Mammary epithelial cell (primary cell): ENCODE measurements at regions of chr1 and their contacts with region 1.

Region 1: DNA sequence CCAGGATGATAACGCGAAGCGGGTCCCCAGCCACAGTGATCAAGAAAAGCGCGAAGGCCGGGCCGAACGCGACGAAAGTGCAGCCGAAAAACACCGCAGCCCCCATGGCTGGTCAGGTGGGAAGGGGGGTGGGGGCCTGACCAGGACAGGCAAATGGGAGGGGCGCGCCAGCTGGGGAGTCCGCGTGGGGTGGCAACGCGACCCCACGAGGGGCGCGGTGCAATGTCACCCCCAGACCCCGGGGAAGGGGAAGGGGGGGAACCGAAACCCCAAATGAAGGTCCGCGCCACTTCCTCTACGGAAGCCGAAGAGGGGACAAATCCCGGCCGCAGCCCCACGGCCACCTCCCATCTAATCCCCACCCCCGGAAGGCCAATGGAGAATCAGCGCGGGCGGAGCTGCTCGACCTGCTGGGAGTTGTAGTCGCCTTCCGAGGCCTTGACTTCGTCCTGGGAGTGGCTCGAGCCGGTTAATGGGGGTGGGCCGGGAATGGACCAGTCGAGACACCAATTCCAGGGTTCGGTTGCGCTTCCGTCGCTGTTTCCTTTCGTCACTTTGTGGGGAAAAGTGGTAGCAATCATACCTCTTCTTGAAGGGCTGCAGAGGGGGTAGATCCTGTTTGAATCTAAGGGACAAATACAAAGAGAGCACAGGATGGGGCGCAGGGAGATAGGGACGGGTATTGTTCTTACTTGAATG is at the start of gene APH1A:
- DNase-seq: peak; percentile 97
- H3K4me3 ChIP-seq: peak within 1 kb of the TSS; percentile 73 to 93 (median 92)
- H3K27ac ChIP-seq: peak within 1 kb of the TSS; percentile 92
- H3K4me1 ChIP-seq: peaks cover 11% of the 10 kb centered on the region
- H3K27me3 ChIP-seq: no peaks in the 10 kb centered on the region
- CTCF ChIP-seq: no peak
- total RNA-seq, gene APH1A: 113 to 119 TPM

Region 2: DNA sequence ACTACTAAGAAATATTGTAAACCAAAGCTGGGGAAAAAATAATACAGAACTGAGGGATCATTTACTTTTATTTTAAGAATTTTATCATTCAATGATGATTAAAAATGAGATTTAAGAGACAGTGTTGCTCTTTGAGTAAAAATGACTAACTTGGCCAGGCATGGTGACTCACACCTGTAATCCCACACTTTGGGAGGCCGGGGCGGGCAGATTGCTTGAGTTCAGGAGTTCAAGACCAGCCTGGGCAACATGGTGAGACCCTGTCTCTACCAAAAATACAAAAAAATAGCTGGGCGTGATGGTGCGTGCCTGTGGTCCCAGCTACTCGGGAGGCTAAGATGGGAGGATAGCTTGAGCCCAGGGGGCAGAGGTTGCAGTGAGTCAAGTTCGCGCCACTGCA is 141.0 kb before region 1 on chr1:
- CTCF ChIA-PET with region 1: no interaction called
- dilution Hi-C with region 1: no loop called
- in situ Hi-C with region 1: no loop called
- intact Hi-C with region 1: no loop called
- DNase-seq: no peak
- H3K4me3 ChIP-seq: no peak overlapping the region
- H3K27ac ChIP-seq: no peak overlapping the region
- H3K4me1 ChIP-seq: no peaks in the 10 kb centered on the region
- H3K27me3 ChIP-seq: no peaks in the 10 kb centered on the region
- CTCF ChIP-seq: no peak

Region 3: DNA sequence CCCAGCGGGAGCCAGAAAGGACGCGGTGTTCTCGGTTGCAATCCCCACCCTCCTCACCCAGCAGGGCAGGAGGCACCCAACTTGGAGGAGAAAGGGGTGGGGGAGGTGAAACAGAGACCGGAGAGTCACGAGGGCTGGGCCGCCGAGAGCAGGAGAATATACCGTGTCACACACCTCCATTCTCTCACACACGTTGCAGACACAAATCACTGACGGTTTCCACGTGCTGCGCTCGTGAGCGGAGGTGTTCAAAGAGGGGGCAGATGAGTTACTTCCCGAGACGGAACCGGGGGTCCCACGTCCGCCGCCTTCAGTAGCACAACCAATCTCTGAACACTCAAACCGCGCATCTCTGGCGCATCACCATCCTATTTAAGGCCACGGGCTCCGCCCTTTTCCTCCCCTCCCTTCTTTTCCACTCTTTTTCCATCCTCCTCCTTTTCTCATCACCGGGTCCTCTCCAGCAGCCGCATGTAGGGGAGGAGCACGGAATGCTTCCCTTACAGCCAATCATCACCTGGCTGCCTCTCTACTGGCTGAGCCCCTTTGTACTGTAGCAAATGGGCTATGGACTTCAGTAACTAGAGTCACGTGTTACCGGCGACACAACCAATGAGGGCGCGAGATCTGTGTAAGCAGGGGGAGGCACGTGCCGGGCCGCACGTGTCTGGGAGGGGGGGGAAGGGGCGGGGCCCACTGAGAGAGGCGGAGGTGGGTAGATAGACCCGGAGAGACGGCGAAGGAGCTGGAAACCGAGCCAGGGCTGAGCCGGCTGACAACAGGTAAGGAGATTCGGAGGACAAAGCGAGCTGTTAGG is 13.2 kb after region 1 on chr1 and contains the start of gene CIART:
- CTCF ChIA-PET with region 1: no interaction called
- dilution Hi-C with region 1: no loop called
- in situ Hi-C with region 1: no loop called
- intact Hi-C with region 1: loop called (anchors 1 kb)
- DNase-seq: peak; percentile 98
- H3K4me3 ChIP-seq: peak within 1 kb of the TSS; percentile 57 to 74 (median 68)
- H3K27ac ChIP-seq: peak within 1 kb of the TSS; percentile 86
- H3K4me1 ChIP-seq: peaks cover 24% of the 10 kb centered on the region
- H3K27me3 ChIP-seq: no peaks in the 10 kb centered on the region
- CTCF ChIP-seq: no peak
- total RNA-seq, gene CIART: 8.1 to 13.2 TPM

Region 4: GRCh38 chr1:150387200-150387599 is 118.3 kb after region 1 on chr1:
- CTCF ChIA-PET with region 1: no interaction called
- dilution Hi-C with region 1: loop called (anchors 5 kb)
- in situ Hi-C with region 1: no loop called
- intact Hi-C with region 1: no loop called
- DNase-seq: no peak
- H3K4me3 ChIP-seq: no peak overlapping the region
- H3K27ac ChIP-seq: no peak overlapping the region
- H3K4me1 ChIP-seq: no peaks in the 10 kb centered on the region
- H3K27me3 ChIP-seq: no peaks in the 10 kb centered on the region
- CTCF ChIP-seq: no peak

Region 5: GRCh38 chr1:150548632-150549495 is 280.0 kb after region 1 on chr1 and contains the start of gene ADAMTSL4:
- CTCF ChIA-PET with region 1: no interaction called
- dilution Hi-C with region 1: no loop called
- in situ Hi-C with region 1: loop called in 1 of 2 experiments (anchors 25 kb)
- intact Hi-C with region 1: no loop called
- DNase-seq: peak; percentile 60
- H3K4me3 ChIP-seq: peak within 1 kb of the TSS; percentile 50 to 63 (median 61)
- H3K27ac ChIP-seq: peak within 1 kb of the TSS; percentile 37
- H3K4me1 ChIP-seq: peaks cover 13% of the 10 kb centered on the region
- H3K27me3 ChIP-seq: no peaks in the 10 kb centered on the region
- CTCF ChIP-seq: peak in 1 of 2 donors; percentile 11
- total RNA-seq, gene ADAMTSL4: 2.9 to 98.0 TPM